ENCODE measurements at regions of chr2 and their contacts with region 1.

Region 1: DNA sequence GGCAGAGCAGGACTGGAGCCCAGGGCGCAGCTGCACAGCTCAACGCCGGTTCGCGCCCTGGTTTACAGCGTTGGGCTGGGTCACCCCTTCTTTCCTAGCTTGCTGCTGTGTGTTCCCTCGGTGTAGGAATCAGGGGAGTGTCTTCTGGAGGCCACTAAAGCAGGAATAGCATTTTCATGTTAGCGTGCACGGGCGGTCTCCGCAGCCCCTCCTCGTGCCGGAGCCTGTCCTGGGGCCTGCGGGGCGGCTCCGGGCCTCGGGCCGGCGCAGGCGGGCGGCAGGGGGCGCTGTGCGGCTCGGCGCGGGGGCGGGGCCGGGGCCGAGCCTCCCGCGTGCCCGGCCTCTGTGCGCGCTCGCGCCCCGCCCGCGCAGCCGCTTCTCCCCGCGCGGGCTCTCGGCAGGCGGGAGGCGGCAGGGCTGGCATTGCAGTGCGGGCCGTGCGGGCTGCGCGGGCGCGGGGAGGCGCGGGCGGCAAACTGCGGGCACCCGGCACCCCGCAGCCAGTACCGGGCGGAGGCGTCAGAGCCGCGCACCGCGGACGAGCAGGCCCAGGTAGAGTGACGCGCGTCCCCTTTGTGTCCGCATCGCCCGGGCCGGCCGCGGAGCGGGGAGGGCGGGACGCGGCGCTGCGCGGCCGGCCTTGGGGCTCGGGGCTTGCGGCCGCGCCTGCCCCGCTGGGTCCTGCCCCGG is at the start of gene RNF144A:
- DNase-seq: peak; percentile 40
- H3K4me3 ChIP-seq: peak within 1 kb of the TSS; percentile 28 to 58 (median 51)
- H3K27ac ChIP-seq: no peak within 1 kb of the TSS
- H3K4me1 ChIP-seq: no peaks in the 10 kb centered on the region
- H3K27me3 ChIP-seq: peaks cover 0 to 2% of the 10 kb centered on the region in 2 experiments
- CTCF ChIP-seq: peak; percentile 43 to 51
- POLR2A ChIP-seq: no peak
- total RNA-seq, gene RNF144A: 19.7 and 28.8 TPM in 2 replicates

Region 2: DNA sequence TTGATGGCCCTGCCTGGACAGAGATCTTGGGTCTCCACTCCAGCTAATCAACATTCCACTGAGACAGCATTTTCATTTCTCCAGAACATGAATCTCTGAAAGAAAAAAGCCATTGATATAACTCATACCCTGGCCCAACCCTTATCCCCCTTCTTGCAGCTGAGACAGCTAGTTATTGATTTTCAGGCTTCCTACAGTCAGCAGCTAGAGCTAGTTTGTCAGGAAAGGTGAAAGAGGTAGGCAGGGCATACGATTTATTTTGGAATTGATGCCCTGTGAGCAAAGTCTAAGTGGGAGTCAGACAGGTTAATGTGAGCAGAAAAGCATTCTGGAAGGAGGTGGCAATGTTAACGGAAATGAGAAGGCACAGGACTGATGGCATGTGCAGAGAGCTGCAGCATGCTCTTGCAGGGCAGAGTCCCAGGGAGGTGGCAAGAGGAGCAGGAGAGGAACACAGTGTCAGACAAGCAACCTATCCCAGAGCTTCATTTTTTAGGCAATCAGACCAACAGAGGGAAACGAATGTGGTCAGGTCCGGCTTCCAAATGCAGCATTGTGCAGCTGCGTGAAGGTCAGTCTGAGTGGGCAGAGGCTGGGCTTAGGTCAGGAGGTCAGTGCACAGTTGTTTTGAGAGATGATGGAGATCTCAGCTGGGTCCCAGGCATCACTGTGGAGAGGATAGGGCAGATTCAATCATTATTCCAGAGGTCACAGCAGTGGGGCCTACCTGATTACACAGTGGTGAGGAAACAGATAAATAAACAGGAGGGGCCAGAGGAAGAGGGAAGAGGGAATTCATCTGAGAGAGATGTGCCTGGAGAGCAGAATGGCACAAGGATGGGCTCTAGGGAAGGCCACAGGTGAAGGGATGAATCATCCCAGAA is 186.3 kb before region 1 on chr2:
- CTCF ChIA-PET with region 1: no interaction called
- POLR2A ChIA-PET with region 1: no interaction called
- dilution Hi-C with region 1: no loop called
- intact Hi-C with region 1: no loop called
- DNase-seq: no peak
- H3K4me3 ChIP-seq: no peak overlapping the region
- H3K27ac ChIP-seq: no peak overlapping the region
- H3K4me1 ChIP-seq: no peaks in the 10 kb centered on the region
- H3K27me3 ChIP-seq: no peaks in the 10 kb centered on the region
- CTCF ChIP-seq: no peak
- POLR2A ChIP-seq: no peak

Region 3: GRCh38 chr2:6826081-6826913 is 90.9 kb before region 1 on chr2:
- CTCF ChIA-PET with region 1: no interaction called
- POLR2A ChIA-PET with region 1: no interaction called
- dilution Hi-C with region 1: no loop called
- intact Hi-C with region 1: loop called (anchors 2 kb)
- DNase-seq: peak; percentile 60
- H3K4me3 ChIP-seq: no peak overlapping the region
- H3K27ac ChIP-seq: peak overlapping the region; percentile 52
- H3K4me1 ChIP-seq: peaks cover 12% of the 10 kb centered on the region
- H3K27me3 ChIP-seq: peaks cover 0 to 2% of the 10 kb centered on the region in 2 experiments
- CTCF ChIP-seq: peak; percentile 50 to 69
- POLR2A ChIP-seq: no peak

Region 4: GRCh38 chr2:6977113-6977741 is 60.0 kb after region 1 on chr2:
- CTCF ChIA-PET with region 1: interaction called, 6 read pairs
- POLR2A ChIA-PET with region 1: no interaction called
- dilution Hi-C with region 1: no loop called
- intact Hi-C with region 1: loop called (anchors 2 kb)
- DNase-seq: peak; percentile 47
- H3K4me3 ChIP-seq: no peak overlapping the region
- H3K27ac ChIP-seq: no peak overlapping the region
- H3K4me1 ChIP-seq: peaks cover 19% of the 10 kb centered on the region
- H3K27me3 ChIP-seq: no peaks in the 10 kb centered on the region
- CTCF ChIP-seq: no peak
- POLR2A ChIP-seq: no peak

Region 5: GRCh38 chr2:7014174-7014640 is 97.0 kb after region 1 on chr2:
- CTCF ChIA-PET with region 1: interaction called, 26 read pairs
- POLR2A ChIA-PET with region 1: interaction called, 5 read pairs
- dilution Hi-C with region 1: no loop called
- intact Hi-C with region 1: loop called (anchors 1 kb)
- DNase-seq: no peak
- H3K4me3 ChIP-seq: no peak overlapping the region
- H3K27ac ChIP-seq: no peak overlapping the region
- H3K4me1 ChIP-seq: no peaks in the 10 kb centered on the region
- H3K27me3 ChIP-seq: no peaks in the 10 kb centered on the region
- CTCF ChIP-seq: peak; percentile 21 to 54
- POLR2A ChIP-seq: no peak

Region 6: DNA sequence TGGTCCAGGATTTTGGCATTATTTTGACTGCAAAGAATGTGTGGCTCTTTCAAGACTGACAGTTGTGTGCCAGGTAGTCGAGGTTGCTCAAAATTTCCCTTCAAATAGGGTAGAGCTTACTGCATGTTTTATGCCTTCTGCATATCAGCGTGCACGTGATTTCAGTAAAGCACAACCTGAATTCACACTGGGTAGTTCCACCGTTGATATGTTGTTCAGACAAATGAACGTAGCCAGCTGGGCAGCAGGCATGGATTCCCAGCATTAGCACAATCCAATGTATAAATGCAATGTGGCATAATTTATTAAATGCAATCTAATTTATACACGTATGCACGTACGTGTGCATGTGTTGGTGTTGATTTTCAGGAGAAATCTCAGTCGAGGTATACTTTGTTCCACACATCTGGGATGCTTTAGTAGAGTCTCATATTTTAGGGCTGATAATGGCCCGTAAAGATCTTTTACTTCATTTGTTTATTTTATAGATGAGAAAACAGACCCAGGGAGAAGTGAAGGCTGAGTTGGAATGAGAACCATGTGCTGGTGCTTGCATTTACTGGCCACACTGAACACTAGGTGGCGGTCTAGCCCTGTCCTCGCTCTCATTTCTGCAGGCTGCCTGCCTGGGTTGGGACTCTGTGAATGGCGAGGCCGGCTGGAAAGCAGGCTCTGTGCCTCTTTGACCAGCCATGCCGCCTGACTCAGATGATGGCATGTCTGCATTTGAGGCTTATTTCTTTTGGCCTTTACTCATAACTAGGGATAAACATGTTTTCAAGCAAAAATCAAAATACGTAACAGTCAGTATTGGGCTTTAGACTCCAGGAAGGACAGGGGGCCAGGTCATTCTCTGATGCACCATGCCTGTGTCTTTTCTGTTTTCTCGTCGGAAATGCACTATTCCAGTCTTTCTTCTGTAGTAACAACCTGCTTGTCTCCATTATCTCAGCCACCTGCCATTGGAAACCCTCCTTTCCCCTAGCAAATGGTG is 120.4 kb after region 1 on chr2:
- CTCF ChIA-PET with region 1: interaction called, 40 read pairs
- POLR2A ChIA-PET with region 1: no interaction called
- dilution Hi-C with region 1: no loop called
- intact Hi-C with region 1: no loop called
- DNase-seq: peak; percentile 52
- H3K4me3 ChIP-seq: no peak overlapping the region
- H3K27ac ChIP-seq: no peak overlapping the region
- H3K4me1 ChIP-seq: no peaks in the 10 kb centered on the region
- H3K27me3 ChIP-seq: no peaks in the 10 kb centered on the region
- CTCF ChIP-seq: peak; percentile 63 to 87
- POLR2A ChIP-seq: no peak